ENCODE measurements at regions of chr1 and their contacts with region 1.

Region 1: DNA sequence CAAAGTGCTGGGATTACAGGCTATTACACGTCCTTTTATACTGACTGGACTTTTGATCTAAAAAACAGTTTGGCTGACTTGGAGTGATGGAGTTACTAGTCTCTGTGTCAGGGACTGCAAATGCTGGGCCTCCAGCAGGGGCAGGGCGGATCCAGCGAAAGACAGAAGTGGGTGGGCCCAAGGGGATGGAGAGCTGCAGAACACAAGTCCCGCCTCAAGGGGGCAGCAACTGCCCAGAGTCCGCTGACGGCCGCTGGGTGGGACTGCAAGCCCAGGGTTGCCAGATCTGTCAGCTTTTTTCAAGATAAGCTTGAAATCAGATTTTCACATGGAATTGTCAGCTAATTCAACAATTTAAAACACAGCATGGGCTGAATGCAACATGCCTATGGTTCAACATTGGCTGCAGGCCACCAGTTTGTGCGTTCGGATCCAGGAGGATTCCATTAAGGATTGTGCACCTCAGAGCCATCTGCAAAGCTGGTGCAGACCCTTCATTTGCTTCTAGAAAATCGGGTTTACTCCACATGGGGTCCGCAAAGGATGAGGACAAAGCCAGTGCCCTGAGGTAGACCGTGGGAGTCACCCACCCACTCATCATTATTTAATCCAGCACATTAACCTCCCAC is 10.7 kb downstream of the STMN1 start:
- DNase-seq: peak; percentile 95
- ATAC-seq: peak; percentile 98
- H3K4me3 Mint-ChIP-seq: no peak overlapping the region
- H3K27ac Mint-ChIP-seq: no peak overlapping the region
- H3K4me1 Mint-ChIP-seq: peaks cover 15% of the 10 kb centered on the region
- H3K27me3 Mint-ChIP-seq: no peaks in the 10 kb centered on the region

Region 2: DNA sequence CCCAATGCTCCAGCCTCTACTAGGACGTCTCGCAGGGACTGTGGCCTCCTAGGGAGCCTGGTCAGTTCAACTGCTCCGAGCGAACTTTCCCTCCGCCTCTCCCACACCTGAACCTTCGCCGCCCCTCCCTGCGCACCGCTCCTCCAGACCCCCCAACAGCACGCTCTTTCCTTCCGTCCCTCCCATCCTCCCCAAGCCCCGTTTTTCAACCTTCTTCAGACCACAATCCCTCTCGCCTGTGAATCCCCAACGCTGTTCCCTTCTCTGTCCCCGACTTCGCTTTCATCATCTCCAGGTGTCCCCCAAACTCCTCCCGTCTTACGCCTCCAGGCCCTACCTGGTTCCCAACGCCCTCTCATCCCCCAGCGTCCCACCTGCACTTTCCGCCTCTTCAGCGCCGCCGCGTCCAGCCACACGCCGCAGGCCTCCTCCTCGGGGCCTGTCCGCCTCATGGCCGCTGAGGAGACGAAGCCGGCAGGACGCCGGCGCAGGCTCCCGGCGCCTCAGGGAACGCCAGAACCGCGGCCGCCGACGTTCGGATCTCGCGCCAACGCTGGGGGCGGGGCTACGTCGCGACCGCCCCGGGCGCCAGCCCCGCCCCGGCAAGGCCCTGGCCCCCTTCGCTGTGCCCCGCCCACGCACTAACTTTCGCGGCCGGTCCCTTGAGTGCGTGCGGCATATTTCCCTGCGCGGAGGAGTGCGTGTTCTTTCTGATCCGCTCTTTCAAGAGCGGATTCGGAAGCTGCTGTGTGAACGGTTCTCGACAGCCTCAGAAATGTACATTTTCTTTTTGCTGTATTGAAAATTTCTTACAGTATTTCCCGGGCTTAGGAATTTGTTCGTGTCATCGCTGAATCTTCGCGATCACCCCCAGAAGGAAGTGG is 36.3 kb before region 1 on chr1 and contains the start of gene AUNIP:
- CTCF ChIA-PET with region 1: interaction called, 4 read pairs
- POLR2A ChIA-PET with region 1: no interaction called
- intact Hi-C with region 1: loop called in 1 of 2 experiments (anchors 1 kb)
- DNase-seq: peak; percentile 97
- ATAC-seq: peak; percentile 95
- H3K4me3 Mint-ChIP-seq: peak within 1 kb of the TSS; percentile 94
- H3K27ac Mint-ChIP-seq: peak within 1 kb of the TSS; percentile 93
- H3K4me1 Mint-ChIP-seq: peaks cover 13% of the 10 kb centered on the region
- H3K27me3 Mint-ChIP-seq: no peaks in the 10 kb centered on the region
- total RNA-seq, gene AUNIP: 9.6 to 12.9 TPM

Region 3: GRCh38 chr1:25905680-25906643 is 10.5 kb after region 1 on chr1 and contains the start of gene STMN1:
- CTCF ChIA-PET with region 1: interaction called, 53 read pairs
- POLR2A ChIA-PET with region 1: interaction called, 5 read pairs
- intact Hi-C with region 1: loop called (anchors 1 kb)
- DNase-seq: peak; percentile 96
- ATAC-seq: peak; percentile 81
- H3K4me3 Mint-ChIP-seq: peak within 1 kb of the TSS; percentile 84
- H3K27ac Mint-ChIP-seq: peak within 1 kb of the TSS; percentile 83
- H3K4me1 Mint-ChIP-seq: peaks cover 25% of the 10 kb centered on the region
- H3K27me3 Mint-ChIP-seq: no peaks in the 10 kb centered on the region
- total RNA-seq, gene STMN1: 557 to 771 TPM

Region 4: DNA sequence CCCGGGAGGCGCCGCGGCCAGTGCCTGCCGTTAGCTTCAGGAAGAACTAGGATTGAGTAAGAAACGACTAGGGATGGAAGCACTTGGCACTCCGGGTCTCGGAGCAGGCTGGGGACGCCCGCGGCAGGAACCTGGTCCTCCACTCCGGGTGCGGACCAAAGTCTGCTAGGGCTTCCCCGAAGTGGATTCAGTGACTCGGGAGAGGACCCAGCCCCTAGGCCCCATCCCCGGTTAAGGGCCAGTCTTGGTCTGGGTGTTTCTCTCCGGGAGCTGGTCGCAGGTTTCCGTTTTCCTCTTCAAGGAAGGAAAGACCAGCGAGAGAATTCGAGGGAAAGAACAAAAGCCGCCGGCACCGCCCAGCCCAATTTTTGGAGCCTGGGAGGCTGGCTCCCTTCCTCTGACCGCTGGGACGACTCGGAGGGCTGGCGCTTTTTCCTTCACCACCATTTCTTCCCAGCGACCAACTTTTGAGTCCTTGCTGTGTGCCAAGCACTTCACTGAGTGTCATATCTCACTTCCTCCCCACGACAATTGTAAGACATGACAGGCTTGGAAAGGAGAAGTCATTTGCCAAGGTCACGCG is 27.6 kb after region 1 on chr1:
- CTCF ChIA-PET with region 1: interaction called, 10 read pairs
- POLR2A ChIA-PET with region 1: no interaction called
- intact Hi-C with region 1: no loop called
- DNase-seq: peak; percentile 43
- ATAC-seq: peak; percentile 42
- H3K4me3 Mint-ChIP-seq: peak overlapping the region; percentile 53
- H3K27ac Mint-ChIP-seq: no peak overlapping the region
- H3K4me1 Mint-ChIP-seq: peaks cover 25% of the 10 kb centered on the region
- H3K27me3 Mint-ChIP-seq: peaks cover 8% of the 10 kb centered on the region

Region 5: DNA sequence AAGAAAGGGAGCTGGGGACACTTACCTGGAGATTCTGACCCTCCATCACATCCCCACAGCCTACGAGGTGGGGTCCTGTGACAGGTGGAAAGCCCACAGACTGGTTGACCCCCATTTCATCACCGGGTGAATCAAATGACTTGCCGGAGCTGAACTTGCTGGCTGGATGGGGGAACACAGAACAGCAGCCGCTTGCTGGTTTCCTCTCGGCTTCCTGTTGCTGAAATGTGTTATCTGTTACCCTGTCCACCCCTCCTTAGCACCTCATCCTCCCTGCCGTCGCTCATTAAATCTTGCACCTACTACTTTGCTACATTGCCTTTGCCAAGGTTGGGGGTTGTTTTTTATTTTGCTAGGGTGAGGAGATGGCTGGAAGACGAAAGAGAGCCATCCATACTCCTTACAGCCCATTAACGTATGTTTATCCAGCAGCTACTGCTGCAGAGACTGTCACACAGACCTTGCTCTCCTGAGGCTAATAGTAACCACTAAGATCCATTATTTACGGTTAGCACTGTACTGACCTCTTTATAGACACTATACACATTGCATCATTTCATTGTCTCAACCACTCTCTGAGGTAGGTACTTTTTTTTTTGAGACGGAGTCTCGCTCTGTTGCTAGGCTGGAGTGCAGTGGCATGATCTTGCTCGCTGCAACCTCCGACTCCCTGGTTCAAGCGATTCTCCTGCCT is 95.4 kb after region 1 on chr1:
- CTCF ChIA-PET with region 1: interaction called, 257 read pairs
- POLR2A ChIA-PET with region 1: interaction called, 7 read pairs
- intact Hi-C with region 1: no loop called
- DNase-seq: peak; percentile 69
- ATAC-seq: peak; percentile 87
- H3K4me3 Mint-ChIP-seq: peak overlapping the region; percentile 73
- H3K27ac Mint-ChIP-seq: peak overlapping the region; percentile 92
- H3K4me1 Mint-ChIP-seq: peaks cover 59% of the 10 kb centered on the region
- H3K27me3 Mint-ChIP-seq: no peaks in the 10 kb centered on the region

Region 6: GRCh38 chr1:26035959-26036755 is 140.7 kb after region 1 on chr1:
- CTCF ChIA-PET with region 1: interaction called, 6 read pairs
- POLR2A ChIA-PET with region 1: interaction called, 13 read pairs
- intact Hi-C with region 1: loop called in 1 of 2 experiments (anchors 1 kb)
- DNase-seq: peak; percentile 86
- ATAC-seq: peak; percentile 76
- H3K4me3 Mint-ChIP-seq: peak overlapping the region; percentile 80
- H3K27ac Mint-ChIP-seq: peak overlapping the region; percentile 78
- H3K4me1 Mint-ChIP-seq: peaks cover 13% of the 10 kb centered on the region
- H3K27me3 Mint-ChIP-seq: peaks cover 6% of the 10 kb centered on the region

Region 7: GRCh38 chr1:26041293-26041800 is 145.9 kb after region 1 on chr1:
- CTCF ChIA-PET with region 1: interaction called, 4 read pairs
- POLR2A ChIA-PET with region 1: interaction called, 13 read pairs
- intact Hi-C with region 1: no loop called
- DNase-seq: no peak
- ATAC-seq: no peak
- H3K4me3 Mint-ChIP-seq: no peak overlapping the region
- H3K27ac Mint-ChIP-seq: no peak overlapping the region
- H3K4me1 Mint-ChIP-seq: peaks cover 5% of the 10 kb centered on the region
- H3K27me3 Mint-ChIP-seq: peaks cover 20% of the 10 kb centered on the region

Region 8: GRCh38 chr1:26072305-26072704 is 176.8 kb after region 1 on chr1:
- CTCF ChIA-PET with region 1: no interaction called
- POLR2A ChIA-PET with region 1: no interaction called
- intact Hi-C with region 1: no loop called
- DNase-seq: no peak
- ATAC-seq: no peak
- H3K4me3 Mint-ChIP-seq: no peak overlapping the region
- H3K27ac Mint-ChIP-seq: no peak overlapping the region
- H3K4me1 Mint-ChIP-seq: no peaks in the 10 kb centered on the region
- H3K27me3 Mint-ChIP-seq: peaks cover 15% of the 10 kb centered on the region

Measured in activated CD4-positive, alpha-beta T cell treated with anti-CD3 and anti-CD28 coated beads for 36 hours (primary cell).